Spleen (tissue), 13 donors: ENCODE measurements at regions of chr17 and their contacts with region 1.

Region 1: DNA sequence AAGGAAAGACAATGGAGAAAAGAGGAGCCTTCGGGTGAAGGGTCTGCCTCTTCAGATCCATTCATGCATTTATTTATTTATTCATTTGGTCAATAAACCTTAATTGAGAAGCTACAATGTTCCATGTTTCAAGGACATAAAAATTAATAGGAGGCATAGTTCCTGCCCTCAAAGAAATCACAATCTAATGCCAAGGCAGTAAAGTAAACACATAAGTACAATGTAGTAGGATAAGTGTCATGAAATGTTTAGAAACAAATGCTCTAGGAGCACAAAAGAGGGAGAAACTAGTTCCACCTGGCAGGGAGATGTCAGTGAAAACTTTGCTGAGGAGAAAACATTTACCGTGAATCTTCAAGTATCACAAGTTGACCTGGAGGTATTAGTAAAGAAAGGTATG is 103.5 kb upstream of the NOG start:
- DNase-seq: no peak
- H3K4me3 ChIP-seq: no peak overlapping the region
- H3K27ac ChIP-seq: no peak overlapping the region
- H3K4me1 ChIP-seq: no peaks in the 10 kb centered on the region
- H3K27me3 ChIP-seq: no peaks in the 10 kb centered on the region
- CTCF ChIP-seq: no peak
- POLR2A ChIP-seq: no peak

Region 2: GRCh38 chr17:55612691-55613141 is 877.3 kb before region 1 on chr17:
- intact Hi-C with region 1: no loop called
- DNase-seq: peak; percentile 19
- H3K4me3 ChIP-seq: no peak overlapping the region
- H3K27ac ChIP-seq: no peak overlapping the region
- H3K4me1 ChIP-seq: no peaks in the 10 kb centered on the region
- H3K27me3 ChIP-seq: peaks cover 0 to 5% (median 0%) of the 10 kb centered on the region in 7 donors
- CTCF ChIP-seq: no peak
- POLR2A ChIP-seq: no peak

Region 3: DNA sequence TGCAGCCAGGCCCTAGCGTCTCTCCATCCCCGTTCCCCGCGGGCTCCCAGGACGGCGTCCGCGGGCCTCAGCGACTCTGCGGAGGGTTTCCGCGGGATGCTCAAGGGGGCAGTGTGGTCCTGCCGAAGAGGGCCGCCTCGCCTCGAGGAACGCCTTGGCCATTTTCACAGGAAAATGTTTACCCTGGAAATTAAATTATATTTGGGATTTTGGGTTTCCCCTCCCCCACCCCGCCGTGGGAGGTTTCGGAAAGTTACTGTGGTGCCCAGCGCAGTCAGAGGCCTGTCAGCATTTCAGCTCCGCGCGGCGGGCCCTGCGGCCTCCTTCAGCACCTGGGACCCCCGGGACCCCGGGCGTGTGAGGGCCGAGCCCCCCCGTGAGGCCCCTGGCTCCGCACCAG is 644.6 kb before region 1 on chr17:
- intact Hi-C with region 1: loop called (anchors 5 kb)
- DNase-seq: peak; percentile 74
- H3K4me3 ChIP-seq: peak overlapping the region in 1 of 8 donors; percentile 37
- H3K27ac ChIP-seq: no peak overlapping the region
- H3K4me1 ChIP-seq: peaks cover 0 to 6% (median 3%) of the 10 kb centered on the region in 6 donors
- H3K27me3 ChIP-seq: peaks cover 0 to 15% (median 5%) of the 10 kb centered on the region in 7 donors
- CTCF ChIP-seq: peak in 8 of 11 experiments; percentile 13 to 51 (median 30)
- POLR2A ChIP-seq: no peak

Region 4: DNA sequence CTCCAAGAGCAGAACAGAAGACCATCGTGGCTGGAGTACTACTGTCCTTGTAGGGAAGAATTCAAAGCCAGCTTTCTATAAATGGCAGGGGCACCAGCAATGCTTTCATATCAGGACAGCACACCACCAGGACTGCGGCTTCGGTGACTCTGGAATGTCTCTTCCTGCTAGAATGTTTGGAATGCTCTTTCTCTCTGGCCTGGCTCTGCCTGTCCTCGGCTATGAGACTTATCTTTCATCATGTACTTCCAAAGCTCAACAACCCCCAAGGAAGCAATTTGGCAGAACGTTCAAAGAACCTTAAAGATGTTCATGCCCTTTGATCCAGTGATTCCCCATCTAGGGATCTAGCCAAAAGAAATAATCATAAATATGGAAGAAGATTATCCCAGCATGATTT is 50.9 kb after region 1 on chr17:
- intact Hi-C with region 1: no loop called
- DNase-seq: no peak
- H3K4me3 ChIP-seq: no peak overlapping the region
- H3K27ac ChIP-seq: no peak overlapping the region
- H3K4me1 ChIP-seq: no peaks in the 10 kb centered on the region
- H3K27me3 ChIP-seq: peaks cover 0 to 6% (median 0%) of the 10 kb centered on the region in 7 donors
- CTCF ChIP-seq: no peak
- POLR2A ChIP-seq: no peak